ENCODE measurements at regions of chr9 and their contacts with region 1.

Region 1: DNA sequence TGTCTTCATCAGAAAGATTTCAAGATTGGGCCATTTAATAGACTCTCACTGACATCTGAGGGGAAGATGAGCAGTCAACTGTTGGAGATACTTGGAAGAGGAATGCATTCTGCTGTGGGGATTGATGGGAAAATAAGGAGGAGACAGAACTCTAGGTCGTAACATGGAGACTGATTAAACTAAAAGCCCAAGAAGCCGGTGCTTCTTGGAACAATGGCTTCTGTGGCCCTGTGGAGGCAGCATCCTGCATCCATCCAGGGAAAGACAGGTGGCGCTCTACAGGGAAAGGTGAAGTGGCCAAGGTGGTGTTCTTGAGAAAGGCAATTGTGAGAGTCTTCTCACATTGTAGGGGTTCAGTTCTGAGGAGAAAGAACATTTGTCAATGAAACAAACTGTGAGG is 31.3 kb downstream of the ZFAND5 start:
- DNase-seq: no peak
- ATAC-seq: no peak
- H3K4me3 Mint-ChIP-seq: no peak overlapping the region
- H3K27ac Mint-ChIP-seq: no peak overlapping the region
- H3K4me1 Mint-ChIP-seq: no peaks in the 10 kb centered on the region
- H3K27me3 Mint-ChIP-seq: peaks cover 2% of the 10 kb centered on the region
- CTCF ChIP-seq: no peak

Region 2: DNA sequence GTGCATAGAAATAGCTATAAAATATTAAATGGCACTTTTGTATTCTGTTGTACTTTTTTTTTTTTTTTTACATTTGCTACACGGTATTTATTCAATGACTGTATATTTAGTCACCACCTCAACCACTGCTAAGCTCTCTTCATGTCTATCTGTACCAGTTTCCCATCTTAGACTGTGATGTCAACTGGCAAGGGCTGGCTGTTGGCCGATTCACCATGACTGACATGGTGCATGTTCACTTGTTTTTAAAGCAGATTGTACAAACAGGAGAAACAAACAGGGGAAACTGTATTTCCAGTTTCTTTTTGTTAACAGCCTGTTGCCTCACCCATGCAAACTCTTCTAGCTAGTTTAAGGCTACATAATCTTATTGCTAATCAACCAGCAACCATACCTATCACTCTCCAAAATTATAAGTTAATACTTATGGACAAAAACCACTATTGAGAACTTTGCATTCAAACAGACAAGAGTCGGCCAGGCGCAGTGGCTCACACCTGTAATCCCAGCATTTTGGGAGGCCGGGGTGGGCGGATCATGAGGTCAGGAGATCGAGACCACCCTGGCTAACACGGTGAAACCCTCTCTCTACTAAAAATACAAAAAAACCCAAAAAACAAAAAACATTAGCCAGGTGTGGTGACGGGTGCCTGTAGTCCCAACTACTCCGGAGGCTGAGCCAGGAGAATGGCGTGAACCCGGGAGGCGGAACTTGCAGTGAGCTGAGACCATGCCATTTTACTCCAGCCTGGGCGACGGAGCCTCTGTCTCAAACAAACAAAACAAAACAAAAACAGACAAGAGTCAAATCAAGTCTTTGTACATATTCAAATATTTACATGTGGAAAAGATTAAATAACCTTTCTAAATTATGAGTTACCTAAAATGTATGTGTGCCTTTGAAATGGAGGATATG is 18.1 kb after region 1 on chr9:
- CTCF ChIA-PET with region 1: no interaction called
- POLR2A ChIA-PET with region 1: no interaction called
- intact Hi-C with region 1: loop called (anchors 2 kb)
- DNase-seq: no peak
- ATAC-seq: no peak
- H3K4me3 Mint-ChIP-seq: no peak overlapping the region
- H3K27ac Mint-ChIP-seq: no peak overlapping the region
- H3K4me1 Mint-ChIP-seq: peaks cover 11% of the 10 kb centered on the region
- H3K27me3 Mint-ChIP-seq: no peaks in the 10 kb centered on the region
- CTCF ChIP-seq: no peak